A549 (cell line): ENCODE measurements at regions of chr11 and their contacts with region 1.

Region 1: GRCh38 chr11:113532697-113533424 is 57.7 kb upstream of the DRD2 start:
- DNase-seq: peak; percentile 31 to 52
- ATAC-seq: peak; percentile 76 to 93; a peak in 4 of 6 replicates
- H3K4me3 ChIP-seq: no peak overlapping the region
- H3K27ac ChIP-seq: no peak overlapping the region
- H3K4me1 ChIP-seq: no peaks in the 10 kb centered on the region
- CTCF ChIP-seq: peak; percentile 66
- EP300 ChIP-seq: no peak
- POLR2A ChIP-seq: no peak
- RAD21 ChIP-seq: peak; percentile 59 to 64

Region 2: DNA sequence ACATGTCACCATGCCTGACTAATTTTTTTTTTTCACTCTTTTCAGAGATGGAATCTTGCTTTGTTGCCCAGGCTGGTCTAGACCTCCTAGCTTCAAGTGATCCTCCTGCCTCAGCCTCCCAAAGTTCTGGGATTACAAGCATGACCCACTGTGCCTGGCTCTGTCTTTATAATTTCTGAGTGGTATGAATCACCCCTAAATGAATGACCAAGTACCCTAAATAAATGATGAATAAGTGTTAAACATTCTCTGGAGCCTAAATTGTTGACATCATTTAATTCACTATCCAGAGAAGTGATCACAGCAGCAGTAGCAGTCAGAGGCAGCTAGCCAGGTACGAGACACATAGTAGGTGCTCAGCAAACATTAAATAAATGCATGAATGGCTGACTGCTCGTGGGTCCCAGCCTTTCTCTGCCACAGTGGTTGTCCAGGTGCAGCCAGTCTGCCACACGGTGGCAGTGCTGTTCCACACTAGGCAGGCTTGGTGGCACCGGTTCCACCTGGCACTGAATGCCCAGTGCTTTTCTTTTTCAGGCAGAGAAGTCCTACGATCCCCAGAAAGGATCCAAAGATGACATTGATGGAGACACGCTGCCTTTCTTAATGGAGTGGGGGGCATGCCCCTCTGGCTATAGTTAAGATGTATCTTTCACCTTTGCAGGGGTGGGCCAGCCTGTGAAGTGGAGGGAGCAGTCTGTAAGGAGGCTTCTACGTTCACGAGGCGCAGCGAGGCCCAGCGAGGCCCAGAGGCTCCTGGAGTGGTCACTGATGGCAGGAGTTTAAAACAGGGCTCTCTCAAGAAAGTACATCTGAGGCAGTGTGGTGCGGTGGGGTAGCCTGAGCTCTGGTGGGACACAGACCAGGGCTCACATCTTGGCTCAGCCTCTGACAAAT is 227.2 kb before region 1 on chr11:
- CTCF ChIA-PET with region 1: interaction called, 43 read pairs
- POLR2A ChIA-PET with region 1: interaction called, 6 read pairs
- DNase-seq: peak; percentile 42 to 49
- ATAC-seq: peak; percentile 98 to 99
- H3K4me3 ChIP-seq: no peak overlapping the region
- H3K27ac ChIP-seq: no peak overlapping the region
- H3K4me1 ChIP-seq: no peaks in the 10 kb centered on the region
- CTCF ChIP-seq: peak; percentile 83
- EP300 ChIP-seq: no peak
- POLR2A ChIP-seq: no peak
- RAD21 ChIP-seq: peak; percentile 89 to 90

Region 3: DNA sequence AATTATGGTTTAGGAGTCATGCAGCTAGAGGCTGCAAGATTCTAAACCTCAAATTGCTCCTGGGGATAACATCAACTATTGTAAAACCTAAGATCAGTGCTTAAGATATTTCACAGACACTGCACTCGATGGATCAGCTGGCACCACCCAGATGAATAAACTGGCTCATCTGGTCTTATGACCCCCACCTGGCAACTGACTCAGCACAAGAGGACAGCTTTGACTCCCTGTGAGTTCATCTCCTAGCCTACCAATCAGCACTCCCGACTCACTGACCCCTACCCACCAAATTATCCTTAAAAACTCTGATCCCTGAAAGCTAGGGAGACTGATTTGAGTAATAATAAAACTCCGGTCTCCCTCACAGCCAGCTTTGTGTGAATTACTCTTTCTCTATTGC is 219.3 kb before region 1 on chr11:
- CTCF ChIA-PET with region 1: interaction called, 10 read pairs
- POLR2A ChIA-PET with region 1: no interaction called
- DNase-seq: no peak
- ATAC-seq: no peak
- H3K4me3 ChIP-seq: no peak overlapping the region; the same call in 2 of the 3 replicates
- H3K27ac ChIP-seq: no peak overlapping the region
- H3K4me1 ChIP-seq: peaks cover 10% of the 10 kb centered on the region; the same call in 2 of the 3 replicates
- CTCF ChIP-seq: no peak
- EP300 ChIP-seq: no peak
- POLR2A ChIP-seq: no peak
- RAD21 ChIP-seq: no peak